Sciatic nerve (tissue), 2 donors: ENCODE measurements at regions of chr4 and their contacts with region 1.

Region 1: GRCh38 chr4:138367942-138368341 is 125.8 kb upstream of the SLC7A11 start:
- DNase-seq: no peak
- ATAC-seq: no peak

Region 2: DNA sequence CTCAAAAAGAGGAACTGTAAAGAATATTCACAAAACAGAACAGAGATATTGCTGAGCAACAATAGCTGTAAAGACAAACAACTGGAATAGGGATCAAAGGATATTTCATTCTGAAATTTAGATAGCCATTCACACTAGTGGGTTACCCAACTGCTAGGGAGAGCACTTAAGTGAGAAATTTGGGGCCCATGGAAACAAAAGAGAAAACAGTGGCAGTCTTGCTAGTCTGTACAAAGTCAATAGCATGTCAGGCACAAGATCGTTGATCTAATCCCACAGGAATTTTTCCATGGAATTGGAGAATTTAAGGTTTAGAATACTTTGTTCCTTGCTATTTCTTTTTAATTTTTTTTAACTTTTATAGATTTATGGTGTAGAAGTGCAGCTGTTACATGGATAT is 1302.6 kb before region 1 on chr4:
- intact Hi-C with region 1: no loop called
- DNase-seq: no peak
- ATAC-seq: no peak

Region 3: GRCh38 chr4:138398322-138398721 is 30.4 kb after region 1 on chr4:
- intact Hi-C with region 1: loop called (anchors 1 kb)
- DNase-seq: no peak
- ATAC-seq: no peak